Activated CD4-positive, alpha-beta T cell treated with anti-CD3 and anti-CD28 coated beads, Interleukin-2, amount 10 ng/mL, durations not matched to agents 24 days and 14 days (primary cell): ENCODE measurements at regions of chr12 and their contacts with region 1.

Region 1: GRCh38 chr12:69007101-69007854 is 74.3 kb upstream of the CPM start:
- DNase-seq: no peak
- H3K4me3 Mint-ChIP-seq: peak overlapping the region; percentile 70
- H3K27ac Mint-ChIP-seq: peak overlapping the region; percentile 84
- H3K4me1 Mint-ChIP-seq: peaks cover 15% of the 10 kb centered on the region
- H3K27me3 Mint-ChIP-seq: peaks cover 2% of the 10 kb centered on the region

Region 2: GRCh38 chr12:68932961-68933893 is 74.1 kb before region 1 on chr12 and contains the start of gene CPM:
- intact Hi-C with region 1: loop called (anchors 5 kb)
- DNase-seq: peak; percentile 96
- H3K4me3 Mint-ChIP-seq: peak within 1 kb of the TSS; percentile 94
- H3K27ac Mint-ChIP-seq: peak within 1 kb of the TSS; percentile 85
- H3K4me1 Mint-ChIP-seq: peaks cover 19% of the 10 kb centered on the region
- H3K27me3 Mint-ChIP-seq: peaks cover 2% of the 10 kb centered on the region
- total RNA-seq, gene CPM: 63.5 and 76.5 TPM in 2 replicates

Region 3: DNA sequence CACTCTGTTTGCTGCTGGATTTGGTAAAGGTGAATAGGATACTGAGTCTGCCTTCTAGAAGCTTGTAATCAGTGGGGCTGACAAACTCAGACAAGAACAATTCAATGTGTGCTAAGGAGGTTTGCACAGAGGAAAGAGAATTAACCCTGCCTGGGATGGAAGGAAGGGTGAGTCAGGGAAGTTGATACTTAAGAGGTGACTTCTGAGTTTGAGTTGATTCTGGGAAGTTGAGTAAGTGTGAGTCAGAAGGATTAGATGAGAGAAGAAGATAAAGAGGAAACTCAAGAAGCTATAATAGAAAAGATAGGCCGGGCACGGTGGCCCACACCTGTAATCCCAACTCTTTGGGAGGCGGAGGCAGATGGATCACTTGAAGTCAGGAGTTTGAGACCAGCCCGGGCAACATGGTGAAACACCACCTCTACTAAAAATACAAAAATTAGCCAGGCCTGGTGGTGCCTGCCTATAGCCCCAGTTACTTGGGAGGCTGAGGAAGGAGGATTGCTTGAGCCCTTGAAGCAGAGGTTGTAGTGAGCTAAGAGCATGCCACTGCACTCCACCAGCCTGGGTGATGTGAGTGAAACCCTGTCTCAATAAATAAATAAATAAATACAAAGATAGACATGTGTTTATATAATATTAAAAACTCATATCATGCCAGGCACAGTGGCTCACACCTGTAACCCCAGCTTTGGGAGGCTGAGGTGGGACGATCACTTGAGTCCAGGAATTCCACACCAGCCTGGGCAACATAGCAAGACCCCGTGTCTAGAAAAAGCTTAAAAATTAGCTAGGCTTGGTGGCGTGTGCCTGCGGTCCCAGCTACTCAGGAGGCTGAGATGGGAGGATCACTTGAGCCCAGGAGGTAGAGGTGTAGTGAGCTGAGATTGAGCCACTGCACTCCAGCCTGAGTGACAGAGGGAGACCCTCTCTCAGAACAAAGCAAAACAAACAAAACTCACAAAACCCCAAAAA is 52.5 kb after region 1 on chr12:
- intact Hi-C with region 1: loop called (anchors 2 kb)
- DNase-seq: no peak
- H3K4me3 Mint-ChIP-seq: peak overlapping the region; percentile 27
- H3K27ac Mint-ChIP-seq: peak overlapping the region; percentile 73
- H3K4me1 Mint-ChIP-seq: peaks cover 29% of the 10 kb centered on the region
- H3K27me3 Mint-ChIP-seq: no peaks in the 10 kb centered on the region

Region 4: DNA sequence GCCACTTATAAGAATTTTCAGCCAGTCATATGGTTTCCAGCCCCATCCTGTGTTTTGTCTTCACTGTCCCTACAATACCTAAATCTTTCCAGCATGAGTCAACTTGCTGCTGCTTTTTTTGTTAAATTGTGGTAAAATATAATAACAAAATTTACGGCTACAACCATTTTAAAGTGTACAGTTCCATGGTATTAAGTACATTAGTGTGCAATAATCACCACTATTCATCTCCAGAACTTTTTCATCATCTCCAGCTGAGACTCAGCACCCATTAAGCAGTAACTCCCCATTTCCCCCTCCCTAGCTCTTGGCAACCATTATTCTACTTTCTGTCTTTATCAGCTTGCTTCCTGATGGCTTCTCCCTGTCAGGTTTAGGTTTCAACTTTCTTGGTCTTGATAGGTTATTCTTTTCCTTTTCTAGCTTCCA is 502.0 kb after region 1 on chr12:
- intact Hi-C with region 1: no loop called
- DNase-seq: no peak
- H3K4me3 Mint-ChIP-seq: no peak overlapping the region
- H3K27ac Mint-ChIP-seq: no peak overlapping the region
- H3K4me1 Mint-ChIP-seq: peaks cover 14% of the 10 kb centered on the region
- H3K27me3 Mint-ChIP-seq: no peaks in the 10 kb centered on the region